ENCODE measurements at regions of chr5 and their contacts with region 1.

Region 1: GRCh38 chr5:10563945-10564837 is at the start of gene ANKRD33B:
- DNase-seq: no peak
- ATAC-seq: peak; percentile 44 to 49
- H3K4me3 ChIP-seq: peak within 1 kb of the TSS; percentile 60 to 79 (median 66)
- H3K27ac ChIP-seq: peak within 1 kb of the TSS; percentile 68 to 72 (median 70)
- H3K4me1 ChIP-seq: peaks cover 0 to 31% of the 10 kb centered on the region in 2 donors
- H3K27me3 ChIP-seq: peaks cover 9 to 17% (median 15%) of the 10 kb centered on the region in 3 donors
- CTCF ChIP-seq: no peak
- POLR2A ChIP-seq: peak; percentile 25 to 63
- total RNA-seq, gene ANKRD33B: 2.2 to 38.9 (median 15.1) TPM

Region 2: GRCh38 chr5:10441083-10441991 is 122.9 kb before region 1 on chr5 and contains the start of gene ROPN1L:
- in situ Hi-C with region 1: no loop called
- intact Hi-C with region 1: loop called (anchors 5 kb)
- DNase-seq: peak; percentile 72 to 76
- ATAC-seq: peak; percentile 84 to 89
- H3K4me3 ChIP-seq: peak within 1 kb of the TSS; percentile 65 to 89 (median 70)
- H3K27ac ChIP-seq: peak within 1 kb of the TSS; percentile 76 to 87 (median 79)
- H3K4me1 ChIP-seq: peaks cover 26 to 29% of the 10 kb centered on the region in 2 donors
- H3K27me3 ChIP-seq: no peaks in the 10 kb centered on the region
- CTCF ChIP-seq: no peak
- POLR2A ChIP-seq: peak; percentile 55 to 73
- total RNA-seq, gene ROPN1L: 0.46 TPM in 1 of 4 donors, not detected in the others

Region 3: DNA sequence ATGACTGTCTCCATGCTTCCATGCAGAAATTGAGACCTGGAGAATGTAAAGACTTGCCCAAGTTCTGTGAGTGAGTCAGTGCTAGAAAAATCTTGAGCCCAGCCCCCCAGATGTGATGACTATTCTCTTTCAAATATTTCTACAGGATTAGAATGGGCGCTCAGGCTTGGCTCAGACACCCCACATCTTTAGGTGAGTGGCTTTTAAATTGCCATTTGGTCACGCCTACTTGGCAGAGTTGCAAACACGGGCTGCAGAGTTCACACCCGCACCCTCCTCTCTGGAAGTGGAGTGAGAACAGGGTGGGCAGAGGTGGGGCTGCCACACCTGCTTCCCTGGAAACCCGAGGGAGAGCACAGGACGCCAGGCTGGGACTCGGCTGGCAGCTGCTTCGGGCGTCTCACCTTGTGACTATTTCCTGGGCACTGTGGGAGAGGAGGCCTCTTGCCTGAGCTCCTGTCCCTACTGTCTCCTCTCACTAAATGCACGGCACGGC is 84.9 kb before region 1 on chr5:
- in situ Hi-C with region 1: no loop called
- intact Hi-C with region 1: no loop called
- DNase-seq: no peak
- ATAC-seq: no peak
- H3K4me3 ChIP-seq: no peak overlapping the region
- H3K27ac ChIP-seq: no peak overlapping the region
- H3K4me1 ChIP-seq: no peaks in the 10 kb centered on the region
- H3K27me3 ChIP-seq: no peaks in the 10 kb centered on the region
- CTCF ChIP-seq: no peak
- POLR2A ChIP-seq: no peak

Region 4: DNA sequence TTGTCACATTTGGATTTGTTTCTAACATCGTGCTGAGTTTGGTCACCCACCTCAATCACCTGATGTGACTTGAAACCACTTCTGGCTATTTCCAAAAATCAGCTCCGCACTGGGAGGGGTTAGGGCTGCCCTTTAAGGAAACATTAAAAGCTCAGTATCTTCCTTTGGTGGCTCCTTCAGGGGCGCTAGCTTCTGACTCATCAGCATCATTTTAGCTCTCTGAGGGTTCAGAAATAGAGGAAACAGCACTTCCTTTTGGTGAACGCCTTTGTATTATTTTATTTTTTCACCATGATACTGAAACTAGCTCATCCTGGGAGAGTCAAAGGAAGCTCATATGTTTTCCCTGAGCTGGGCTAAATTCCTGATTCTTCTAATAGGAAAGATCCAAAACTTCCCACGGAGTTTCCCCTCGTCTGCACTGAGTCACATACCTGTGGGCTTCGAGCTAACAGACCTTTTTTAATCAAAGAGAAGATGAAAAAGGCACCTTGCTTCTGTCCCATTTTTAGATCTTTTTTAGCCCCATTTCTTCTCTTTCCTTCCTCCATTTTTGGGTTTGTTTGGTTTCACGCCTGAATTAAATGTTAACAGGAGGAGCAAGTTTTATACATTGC is 74.3 kb before region 1 on chr5:
- in situ Hi-C with region 1: no loop called
- intact Hi-C with region 1: no loop called
- DNase-seq: no peak
- ATAC-seq: peak in 1 of 2 donors; percentile 42
- H3K4me3 ChIP-seq: no peak overlapping the region
- H3K27ac ChIP-seq: no peak overlapping the region
- H3K4me1 ChIP-seq: no peaks in the 10 kb centered on the region
- H3K27me3 ChIP-seq: no peaks in the 10 kb centered on the region
- CTCF ChIP-seq: no peak
- POLR2A ChIP-seq: no peak

Region 5: GRCh38 chr5:10601246-10602030 is 37.2 kb after region 1 on chr5:
- in situ Hi-C with region 1: no loop called
- intact Hi-C with region 1: loop called (anchors 2 kb)
- DNase-seq: peak; percentile 85 to 86
- ATAC-seq: peak; percentile 84
- H3K4me3 ChIP-seq: peak overlapping the region; percentile 8 to 46 (median 26)
- H3K27ac ChIP-seq: peak overlapping the region; percentile 80 to 92 (median 86)
- H3K4me1 ChIP-seq: peaks cover 34 to 37% of the 10 kb centered on the region in 2 donors
- H3K27me3 ChIP-seq: no peaks in the 10 kb centered on the region
- CTCF ChIP-seq: no peak
- POLR2A ChIP-seq: peak in 1 of 2 donors; percentile 43

Region 6: GRCh38 chr5:10627160-10627701 is 63.0 kb after region 1 on chr5:
- in situ Hi-C with region 1: no loop called
- intact Hi-C with region 1: loop called (anchors 1 kb)
- DNase-seq: no peak
- ATAC-seq: peak; percentile 19 to 34
- H3K4me3 ChIP-seq: peak overlapping the region; percentile 29 to 46 (median 42)
- H3K27ac ChIP-seq: peak overlapping the region; percentile 44 to 64 (median 52)
- H3K4me1 ChIP-seq: peaks cover 14 to 18% of the 10 kb centered on the region in 2 donors
- H3K27me3 ChIP-seq: no peaks in the 10 kb centered on the region
- CTCF ChIP-seq: no peak
- POLR2A ChIP-seq: no peak